ENCODE measurements at regions of chr2 and their contacts with region 1.

Region 1: DNA sequence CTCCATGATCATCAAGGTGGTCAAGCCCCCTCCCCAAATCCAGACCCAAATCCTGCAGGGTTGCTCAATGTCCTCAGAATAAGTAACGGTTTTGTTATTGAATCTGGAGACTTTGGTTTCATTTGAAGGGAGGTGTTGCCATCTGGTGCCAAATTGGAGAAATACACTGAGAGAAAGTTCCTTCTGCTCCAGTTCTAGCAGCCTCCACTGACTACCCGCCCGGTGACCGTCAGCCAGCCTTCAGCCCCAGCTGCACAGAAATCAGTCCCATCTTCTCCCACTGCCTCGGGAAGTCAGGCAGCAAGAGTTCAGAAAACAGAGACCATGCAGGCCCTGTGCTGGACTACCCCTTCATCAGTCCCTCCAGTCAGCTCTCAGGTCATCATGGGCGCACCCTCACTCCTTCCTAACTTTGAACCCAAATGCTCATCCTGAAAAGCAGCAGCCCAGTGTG is 38.7 kb downstream of the PKDCC start:
- DNase-seq: peak; percentile 23
- H3K4me3 Mint-ChIP-seq: no peak overlapping the region
- H3K27ac Mint-ChIP-seq: no peak overlapping the region
- H3K4me1 Mint-ChIP-seq: peaks cover 16% of the 10 kb centered on the region
- H3K27me3 Mint-ChIP-seq: peaks cover 24% of the 10 kb centered on the region

Region 2: GRCh38 chr2:41947701-41948396 is 138.7 kb before region 1 on chr2:
- intact Hi-C with region 1: loop called (anchors 10 kb)
- DNase-seq: no peak
- H3K4me3 Mint-ChIP-seq: no peak overlapping the region
- H3K27ac Mint-ChIP-seq: no peak overlapping the region
- H3K4me1 Mint-ChIP-seq: no peaks in the 10 kb centered on the region
- H3K27me3 Mint-ChIP-seq: peaks cover 8% of the 10 kb centered on the region

Region 3: DNA sequence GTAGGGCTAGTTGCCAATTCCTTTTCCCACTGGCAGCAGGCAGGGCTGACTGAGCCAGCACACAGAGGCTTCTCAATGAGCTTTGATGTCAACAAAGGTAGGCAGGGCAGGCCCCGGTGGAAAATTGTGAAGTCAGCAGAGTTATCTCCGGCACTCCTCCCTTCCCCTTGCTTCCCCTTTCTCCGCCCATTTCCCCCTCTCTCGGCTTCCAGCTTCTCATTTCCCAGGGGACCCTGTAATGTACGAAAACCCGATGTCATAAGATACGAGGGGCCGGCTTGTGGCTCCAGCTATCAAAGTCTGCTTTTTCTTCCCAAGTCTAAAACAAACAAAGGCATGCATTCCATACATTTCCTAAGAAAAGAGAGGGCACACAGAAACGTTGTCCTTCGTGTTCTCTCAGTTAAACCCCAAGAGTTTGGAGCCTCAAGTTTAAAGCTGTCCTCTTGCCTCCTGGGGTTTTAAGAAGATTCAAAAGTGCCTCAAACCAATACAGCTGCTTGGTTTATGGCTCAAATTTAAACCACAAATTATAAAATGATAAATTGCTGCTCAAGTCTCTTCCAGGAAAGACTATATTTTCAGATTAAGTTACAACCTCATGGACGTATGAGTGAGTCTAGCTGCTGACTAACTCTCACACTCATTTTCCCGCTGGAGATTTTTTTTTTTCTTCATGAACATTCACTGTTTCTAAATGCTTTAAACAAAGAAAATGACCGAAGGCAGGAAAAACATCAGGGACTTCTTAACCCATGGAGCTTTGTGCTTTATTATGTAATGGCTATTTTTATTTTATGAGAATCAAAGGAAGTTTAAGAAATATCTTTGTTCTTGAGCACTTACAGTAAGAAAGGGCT is 55.4 kb after region 1 on chr2:
- intact Hi-C with region 1: no loop called
- DNase-seq: no peak
- H3K4me3 Mint-ChIP-seq: peak overlapping the region; percentile 49
- H3K27ac Mint-ChIP-seq: no peak overlapping the region
- H3K4me1 Mint-ChIP-seq: peaks cover 63% of the 10 kb centered on the region
- H3K27me3 Mint-ChIP-seq: no peaks in the 10 kb centered on the region